Activated naive CD4-positive, alpha-beta T cell treated with anti-CD3 and anti-CD28 coated beads for 36 hours (primary cell): ENCODE measurements at regions of chr6 and their contacts with region 1.

Region 1: GRCh38 chr6:132530293-132530974 is 7.6 kb upstream of the TAAR9 start:
- DNase-seq: peak; percentile 81
- H3K4me3 Mint-ChIP-seq: no peak overlapping the region
- H3K27ac Mint-ChIP-seq: no peak overlapping the region
- H3K4me1 Mint-ChIP-seq: peaks cover 2% of the 10 kb centered on the region
- H3K27me3 Mint-ChIP-seq: peaks cover 7% of the 10 kb centered on the region

Region 2: DNA sequence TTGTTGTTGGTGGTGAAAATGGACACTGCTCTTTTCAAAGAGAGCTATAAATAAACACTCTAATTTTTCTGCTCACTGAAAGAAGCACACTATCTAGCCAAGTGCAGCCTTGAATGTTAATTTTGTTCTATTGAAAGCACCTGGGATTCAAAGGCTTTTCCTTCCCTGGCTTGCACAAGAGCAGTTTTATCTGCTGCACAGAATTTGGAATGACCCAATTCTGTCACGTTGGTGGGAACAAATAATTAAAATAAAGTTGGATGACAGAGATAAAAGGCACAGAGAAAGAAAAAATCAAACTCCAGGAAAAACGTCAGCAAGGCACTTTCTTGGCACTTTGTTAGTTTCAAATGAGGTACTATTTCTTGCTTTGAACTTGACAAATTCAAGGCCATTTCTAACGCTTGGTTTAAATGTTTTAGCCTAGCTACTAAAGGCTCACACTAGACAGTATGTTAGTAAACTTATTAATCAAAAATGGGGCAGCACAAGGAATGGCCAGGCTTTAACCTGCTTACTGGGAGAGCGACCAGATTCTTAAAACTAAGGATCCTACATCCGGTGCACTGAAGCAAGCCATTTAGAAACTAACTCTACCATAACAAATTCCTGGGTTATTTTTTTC is 1102.9 kb before region 1 on chr6:
- CTCF ChIA-PET with region 1: no interaction called
- intact Hi-C with region 1: no loop called
- DNase-seq: no peak
- H3K4me3 Mint-ChIP-seq: no peak overlapping the region
- H3K27ac Mint-ChIP-seq: no peak overlapping the region
- H3K4me1 Mint-ChIP-seq: peaks cover 24% of the 10 kb centered on the region
- H3K27me3 Mint-ChIP-seq: no peaks in the 10 kb centered on the region

Region 3: GRCh38 chr6:132548746-132549463 is 18.5 kb after region 1 on chr6:
- CTCF ChIA-PET with region 1: interaction called, 13 read pairs
- intact Hi-C with region 1: no loop called
- DNase-seq: no peak
- H3K4me3 Mint-ChIP-seq: no peak overlapping the region
- H3K27ac Mint-ChIP-seq: no peak overlapping the region
- H3K4me1 Mint-ChIP-seq: no peaks in the 10 kb centered on the region
- H3K27me3 Mint-ChIP-seq: peaks cover 12% of the 10 kb centered on the region

Region 4: GRCh38 chr6:132669690-132670291 is 139.4 kb after region 1 on chr6:
- CTCF ChIA-PET with region 1: interaction called, 3 read pairs
- intact Hi-C with region 1: loop called (anchors 1 kb)
- DNase-seq: no peak
- H3K4me3 Mint-ChIP-seq: no peak overlapping the region
- H3K27ac Mint-ChIP-seq: no peak overlapping the region
- H3K4me1 Mint-ChIP-seq: peaks cover 3% of the 10 kb centered on the region
- H3K27me3 Mint-ChIP-seq: no peaks in the 10 kb centered on the region

Region 5: DNA sequence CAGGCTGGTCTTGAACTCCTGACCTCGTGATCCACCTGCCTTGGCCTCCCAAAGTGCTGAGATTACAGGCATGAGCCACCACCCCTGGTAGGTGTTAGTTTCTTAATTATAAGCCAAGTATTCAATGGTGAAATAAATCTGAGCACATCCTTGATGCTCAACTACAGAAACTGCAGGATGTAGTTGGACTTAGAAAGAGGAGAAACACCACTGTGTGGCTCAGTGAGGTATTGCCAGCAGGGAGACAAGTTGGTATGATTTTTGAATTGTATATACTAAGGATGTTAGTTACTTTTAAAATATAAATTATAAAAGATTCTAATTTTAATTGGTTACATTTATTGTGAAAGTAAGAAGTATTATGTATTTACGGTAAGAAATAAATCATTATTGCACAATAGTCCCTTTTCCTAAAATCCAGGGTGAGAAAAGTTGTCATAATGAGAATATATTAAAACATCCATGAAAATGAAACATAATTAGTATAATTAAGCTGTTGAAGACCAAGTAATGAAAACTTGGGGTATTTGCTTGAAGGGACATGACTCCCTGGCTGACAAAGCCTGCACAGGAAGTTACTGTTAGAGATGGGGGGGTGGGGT is 250.4 kb after region 1 on chr6:
- CTCF ChIA-PET with region 1: interaction called, 3 read pairs
- intact Hi-C with region 1: loop called (anchors 5 kb)
- DNase-seq: peak; percentile 27
- H3K4me3 Mint-ChIP-seq: no peak overlapping the region
- H3K27ac Mint-ChIP-seq: no peak overlapping the region
- H3K4me1 Mint-ChIP-seq: no peaks in the 10 kb centered on the region
- H3K27me3 Mint-ChIP-seq: no peaks in the 10 kb centered on the region

Region 6: GRCh38 chr6:132830334-132830751 is 299.9 kb after region 1 on chr6:
- CTCF ChIA-PET with region 1: no interaction called
- intact Hi-C with region 1: loop called (anchors 2 kb)
- DNase-seq: no peak
- H3K4me3 Mint-ChIP-seq: no peak overlapping the region
- H3K27ac Mint-ChIP-seq: no peak overlapping the region
- H3K4me1 Mint-ChIP-seq: no peaks in the 10 kb centered on the region
- H3K27me3 Mint-ChIP-seq: no peaks in the 10 kb centered on the region

Region 7: GRCh38 chr6:133512410-133513016 is 982.1 kb after region 1 on chr6:
- CTCF ChIA-PET with region 1: no interaction called
- intact Hi-C with region 1: loop called (anchors 1 kb)
- DNase-seq: peak; percentile 58
- H3K4me3 Mint-ChIP-seq: no peak overlapping the region
- H3K27ac Mint-ChIP-seq: no peak overlapping the region
- H3K4me1 Mint-ChIP-seq: no peaks in the 10 kb centered on the region
- H3K27me3 Mint-ChIP-seq: peaks cover 15% of the 10 kb centered on the region

Region 8: DNA sequence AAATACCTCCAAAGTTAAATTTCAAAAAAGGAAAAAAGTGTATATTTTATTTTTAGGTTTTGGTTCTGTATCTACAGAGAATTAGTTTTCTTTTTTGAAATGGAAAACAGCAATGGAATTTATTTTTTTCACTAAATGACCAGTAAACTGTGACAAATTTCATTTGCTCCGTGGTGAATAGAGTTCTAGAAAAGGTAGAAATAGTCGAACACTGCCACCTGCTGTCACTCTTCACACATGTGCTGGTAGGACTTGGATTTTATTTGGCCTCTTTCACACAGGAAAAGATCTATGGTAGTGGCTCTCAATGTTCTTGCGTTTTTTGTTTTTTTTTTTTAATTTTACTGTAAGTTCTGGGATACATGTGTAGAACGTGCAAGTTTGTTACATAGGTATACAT is 1023.2 kb after region 1 on chr6:
- CTCF ChIA-PET with region 1: no interaction called
- intact Hi-C with region 1: loop called (anchors 5 kb)
- DNase-seq: peak; percentile 47
- H3K4me3 Mint-ChIP-seq: no peak overlapping the region
- H3K27ac Mint-ChIP-seq: no peak overlapping the region
- H3K4me1 Mint-ChIP-seq: no peaks in the 10 kb centered on the region
- H3K27me3 Mint-ChIP-seq: peaks cover 4% of the 10 kb centered on the region